Activated B cell treated with CpG ODN at 0.5 μM for 24 hours (primary cell): ENCODE measurements at regions of chr11 and their contacts with region 1.

Region 1: DNA sequence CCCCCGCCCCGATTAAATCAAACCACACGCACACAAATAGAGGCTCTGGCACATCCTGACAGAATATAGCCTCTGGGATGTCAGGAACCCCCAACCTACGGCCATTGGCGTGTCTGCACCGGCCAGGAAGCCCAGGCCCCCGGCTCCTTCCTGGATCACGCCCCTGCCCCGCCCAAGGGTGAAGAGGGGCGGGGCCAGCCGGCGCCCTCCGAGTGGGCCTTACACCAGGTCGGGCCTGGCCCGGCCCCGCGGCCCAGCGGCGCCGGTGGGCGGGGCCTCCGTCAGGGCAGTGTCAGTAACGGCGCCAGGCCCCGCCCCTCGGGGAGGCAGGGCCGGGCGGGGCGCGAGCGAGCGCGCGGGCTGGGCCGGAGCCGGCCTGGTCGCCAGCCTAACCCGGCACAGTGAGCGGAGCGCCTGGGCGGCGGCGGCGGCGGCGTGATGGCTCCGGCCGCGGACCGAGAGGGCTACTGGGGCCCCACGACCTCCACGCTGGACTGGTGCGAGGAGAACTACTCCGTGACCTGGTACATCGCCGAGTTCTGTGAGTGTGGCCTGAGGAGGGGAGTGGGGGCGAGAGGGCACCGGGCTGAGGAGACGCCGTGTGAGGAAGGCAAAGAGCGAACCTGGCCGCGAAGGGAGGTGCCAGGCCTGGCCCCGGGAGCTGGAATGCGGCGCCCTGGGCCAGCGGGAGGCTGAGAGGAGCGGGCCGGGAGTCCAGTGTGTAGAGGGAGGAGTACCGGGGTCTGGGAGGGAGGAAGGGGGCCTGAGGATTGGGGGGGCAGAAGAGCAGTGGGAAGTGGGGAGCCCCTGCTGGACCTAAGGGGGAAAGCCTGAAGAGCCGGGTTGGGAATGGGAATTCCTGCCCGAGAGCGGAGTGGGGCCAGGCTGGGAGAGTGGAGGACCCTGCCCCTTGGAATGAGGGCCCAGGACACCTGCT is at the start of gene ACER3:
- DNase-seq: peak; percentile 89
- ATAC-seq: peak; percentile 99
- H3K4me3 Mint-ChIP-seq: peak within 1 kb of the TSS; percentile 89
- H3K27ac Mint-ChIP-seq: peak within 1 kb of the TSS; percentile 84
- H3K4me1 Mint-ChIP-seq: peaks cover 45% of the 10 kb centered on the region
- H3K27me3 Mint-ChIP-seq: no peaks in the 10 kb centered on the region
- CTCF ChIP-seq: no peak
- total RNA-seq, gene ACER3: 11.8 and 12.4 TPM in 2 replicates

Region 2: DNA sequence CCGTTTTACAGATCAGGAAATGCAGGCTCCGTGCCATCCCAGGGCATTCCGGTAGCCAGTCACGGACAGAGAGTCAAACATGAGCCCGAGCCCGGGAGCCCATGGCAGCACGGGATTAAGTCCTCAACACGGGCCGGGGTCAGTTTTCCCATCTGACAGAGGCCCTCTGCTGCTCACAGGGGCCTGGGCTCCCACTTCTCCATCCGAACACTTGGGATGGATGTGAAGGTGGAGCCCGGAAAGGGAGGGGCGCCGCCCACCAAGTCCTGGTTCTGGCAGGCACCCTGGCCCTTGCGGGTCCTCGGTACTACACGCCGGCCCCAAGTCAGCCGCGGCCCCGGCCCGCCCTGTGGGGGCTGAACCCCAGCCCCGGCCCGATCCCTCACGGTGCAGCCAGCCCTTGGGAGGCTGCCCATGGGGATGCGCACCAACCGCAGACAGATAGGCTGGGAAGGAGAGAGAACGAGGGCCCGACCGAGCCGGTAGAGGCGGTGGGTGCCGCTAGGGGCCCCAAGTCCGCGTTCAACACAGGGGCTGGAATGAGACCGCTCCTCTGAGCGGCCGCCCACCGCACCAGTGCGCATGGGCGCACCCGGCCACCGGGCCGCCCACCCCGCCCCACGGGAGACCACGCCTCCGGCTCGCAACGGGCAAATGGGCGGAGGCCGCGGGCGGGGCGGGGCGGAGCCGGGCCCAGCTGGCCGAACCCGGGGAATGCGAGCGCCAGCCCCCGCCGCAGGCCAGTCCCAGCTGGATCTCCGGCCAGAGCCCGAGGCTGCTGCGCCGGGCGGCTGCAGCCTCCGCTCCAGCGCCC is 205.6 kb after region 1 on chr11 and contains the start of gene CAPN5:
- CTCF ChIA-PET with region 1: no interaction called
- POLR2A ChIA-PET with region 1: no interaction called
- intact Hi-C with region 1: loop called (anchors 2 kb)
- DNase-seq: peak; percentile 93
- ATAC-seq: peak; percentile 95
- H3K4me3 Mint-ChIP-seq: peak within 1 kb of the TSS; percentile 85
- H3K27ac Mint-ChIP-seq: peak within 1 kb of the TSS; percentile 54
- H3K4me1 Mint-ChIP-seq: peaks cover 10% of the 10 kb centered on the region
- H3K27me3 Mint-ChIP-seq: no peaks in the 10 kb centered on the region
- CTCF ChIP-seq: no peak
- total RNA-seq, gene CAPN5: 0.44 and 0.71 TPM in 2 replicates

Region 3: DNA sequence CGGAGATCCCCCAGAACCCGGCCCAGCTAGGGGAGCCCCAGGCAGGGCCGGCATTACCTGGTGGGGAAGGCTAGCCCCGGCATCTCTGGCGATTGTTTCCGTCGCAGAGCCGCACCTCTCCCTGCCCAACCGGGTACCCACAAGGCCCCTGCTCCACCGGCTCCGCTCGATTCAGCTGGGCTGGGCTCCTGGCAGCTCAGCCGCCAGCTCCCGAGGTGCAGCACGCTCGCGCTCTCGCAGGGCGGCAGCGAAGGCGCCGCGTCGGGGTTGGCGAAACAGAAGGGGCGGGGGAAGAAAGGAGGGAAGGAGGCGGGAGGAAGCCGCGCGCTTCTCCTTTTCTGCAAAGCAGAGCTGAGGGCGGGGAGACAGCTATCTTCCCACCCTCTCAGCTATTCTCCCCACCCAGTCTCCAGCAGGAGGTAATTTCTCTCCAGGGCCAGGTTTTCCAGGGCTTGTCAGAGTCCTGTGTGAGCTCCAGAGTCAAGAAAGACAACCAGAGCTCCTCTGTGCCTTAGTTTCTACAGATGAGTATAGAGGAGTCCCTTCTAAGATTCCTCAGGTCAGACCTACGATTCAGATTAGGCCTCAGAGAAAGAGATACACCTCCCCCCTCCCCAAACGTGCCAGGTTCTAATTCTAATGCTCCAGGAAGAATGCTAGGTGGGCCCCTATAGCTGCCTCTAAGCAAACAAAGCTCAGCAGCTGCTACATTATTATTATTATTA is 551.1 kb after region 1 on chr11:
- CTCF ChIA-PET with region 1: no interaction called
- POLR2A ChIA-PET with region 1: no interaction called
- intact Hi-C with region 1: loop called (anchors 5 kb)
- DNase-seq: peak; percentile 70
- ATAC-seq: peak; percentile 96
- H3K4me3 Mint-ChIP-seq: peak overlapping the region; percentile 94
- H3K27ac Mint-ChIP-seq: peak overlapping the region; percentile 85
- H3K4me1 Mint-ChIP-seq: peaks cover 23% of the 10 kb centered on the region
- H3K27me3 Mint-ChIP-seq: no peaks in the 10 kb centered on the region
- CTCF ChIP-seq: no peak